PC-9 (cell line): ENCODE measurements at regions of chr4 and their contacts with region 1.

Region 1: DNA sequence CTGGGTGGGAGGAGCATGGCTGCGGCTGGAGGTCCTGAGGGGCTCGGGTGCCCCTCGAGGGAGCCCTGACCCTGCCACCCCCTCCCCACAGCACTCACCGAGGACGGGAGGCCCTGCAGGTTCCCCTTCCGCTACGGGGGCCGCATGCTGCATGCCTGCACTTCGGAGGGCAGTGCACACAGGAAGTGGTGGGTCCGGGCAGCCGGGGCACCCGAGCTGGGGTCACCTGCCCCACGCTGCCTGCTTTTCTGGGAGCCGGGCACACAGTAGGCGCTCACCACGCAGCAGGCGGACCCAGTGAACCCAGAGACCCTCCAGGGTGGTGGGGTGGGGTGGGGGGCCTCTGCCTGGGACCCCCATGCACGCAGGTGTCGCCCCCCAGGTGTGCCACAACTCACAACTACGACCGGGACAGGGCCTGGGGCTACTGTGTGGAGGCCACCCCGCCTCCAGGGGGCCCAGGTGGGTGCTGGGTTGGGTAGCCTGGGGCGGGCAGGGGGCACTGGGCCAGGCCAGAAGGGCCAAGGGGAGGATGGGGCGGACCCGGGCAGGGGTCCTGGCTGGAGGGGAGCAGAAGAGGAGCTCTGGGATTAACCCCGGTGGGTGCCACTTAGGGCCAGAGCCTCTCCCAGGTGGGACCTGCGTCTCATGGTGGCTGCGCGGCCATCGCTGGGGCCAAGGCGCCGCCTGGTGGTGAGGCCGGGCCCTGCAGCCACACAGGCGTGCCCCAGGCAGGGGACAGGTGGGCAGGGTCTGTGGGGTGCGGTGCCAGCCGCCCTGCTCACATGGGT is 1.4 kb downstream of the HGFAC start:
- DNase-seq: peak in 1 of 2 experiments; percentile 68
- H3K4me3 ChIP-seq: no peak overlapping the region
- H3K27ac ChIP-seq: no peak overlapping the region
- H3K4me1 ChIP-seq: no peaks in the 10 kb centered on the region
- H3K27me3 ChIP-seq: no peaks in the 10 kb centered on the region
- CTCF ChIP-seq: peak; percentile 89

Region 2: DNA sequence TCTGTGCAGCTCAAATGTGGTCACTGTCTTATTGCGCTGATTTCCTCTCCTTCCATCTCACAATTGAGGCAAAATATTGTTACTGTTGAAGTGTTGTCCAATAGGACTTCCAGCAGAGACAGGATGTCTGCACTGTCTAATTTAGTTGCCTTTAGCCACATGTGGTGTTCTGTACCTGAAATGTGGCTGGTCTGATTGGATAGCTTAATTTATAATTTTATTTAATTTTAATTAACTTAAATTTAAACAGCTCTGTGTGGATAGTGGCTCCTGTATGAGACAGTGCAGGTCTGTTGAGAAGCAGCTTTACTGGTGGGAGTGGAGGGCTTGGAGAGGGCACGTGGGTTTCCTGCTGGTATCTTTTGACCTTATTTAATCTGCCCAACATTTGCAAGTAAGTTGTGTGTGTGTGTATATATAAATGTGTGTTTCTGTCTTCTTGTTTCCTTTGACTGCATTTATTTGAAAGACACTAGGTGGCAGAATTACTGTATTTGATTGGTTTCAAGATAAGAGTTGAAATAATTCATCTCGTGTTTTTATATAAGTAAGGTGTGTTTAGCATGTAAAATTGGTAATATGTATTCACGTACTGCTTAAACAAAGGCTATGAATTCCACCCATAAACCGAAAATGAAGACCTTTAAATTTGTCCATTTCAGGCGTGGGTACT is 249.5 kb before region 1 on chr4:
- CTCF ChIA-PET with region 1: no interaction called
- POLR2A ChIA-PET with region 1: no interaction called
- intact Hi-C with region 1: loop called (anchors 1 kb)
- DNase-seq: no peak
- H3K4me3 ChIP-seq: no peak overlapping the region
- H3K27ac ChIP-seq: no peak overlapping the region
- H3K4me1 ChIP-seq: no peaks in the 10 kb centered on the region
- H3K27me3 ChIP-seq: no peaks in the 10 kb centered on the region
- CTCF ChIP-seq: peak; percentile 50; the same call in 1 of the 2 replicates

Region 3: GRCh38 chr4:3346146-3346545 is 97.0 kb before region 1 on chr4:
- CTCF ChIA-PET with region 1: no interaction called
- POLR2A ChIA-PET with region 1: interaction called, 4 read pairs
- intact Hi-C with region 1: loop called (anchors 2 kb)
- DNase-seq: peak; percentile 35 to 61
- H3K4me3 ChIP-seq: no peak overlapping the region
- H3K27ac ChIP-seq: no peak overlapping the region
- H3K4me1 ChIP-seq: no peaks in the 10 kb centered on the region
- H3K27me3 ChIP-seq: no peaks in the 10 kb centered on the region
- CTCF ChIP-seq: peak; percentile 82

Region 4: GRCh38 chr4:3388471-3389232 is 54.5 kb before region 1 on chr4:
- CTCF ChIA-PET with region 1: no interaction called
- POLR2A ChIA-PET with region 1: no interaction called
- intact Hi-C with region 1: loop called (anchors 5 kb)
- DNase-seq: no peak
- H3K4me3 ChIP-seq: no peak overlapping the region
- H3K27ac ChIP-seq: no peak overlapping the region
- H3K4me1 ChIP-seq: no peaks in the 10 kb centered on the region
- H3K27me3 ChIP-seq: no peaks in the 10 kb centered on the region
- CTCF ChIP-seq: no peak